ENCODE measurements at regions of chr3 and their contacts with region 1.

Region 1: GRCh38 chr3:69161587-69162307 is 39.4 kb upstream of the LMOD3 start:
- DNase-seq: peak; percentile 81
- H3K4me3 Mint-ChIP-seq: no peak overlapping the region
- H3K27ac Mint-ChIP-seq: no peak overlapping the region
- H3K4me1 Mint-ChIP-seq: peaks cover 2% of the 10 kb centered on the region
- H3K27me3 Mint-ChIP-seq: peaks cover 6% of the 10 kb centered on the region

Region 2: GRCh38 chr3:69410250-69410649 is 248.5 kb after region 1 on chr3:
- intact Hi-C with region 1: loop called (anchors 1 kb)
- DNase-seq: peak; percentile 91
- H3K4me3 Mint-ChIP-seq: no peak overlapping the region
- H3K27ac Mint-ChIP-seq: no peak overlapping the region
- H3K4me1 Mint-ChIP-seq: peaks cover 11% of the 10 kb centered on the region
- H3K27me3 Mint-ChIP-seq: peaks cover 7% of the 10 kb centered on the region

Region 3: DNA sequence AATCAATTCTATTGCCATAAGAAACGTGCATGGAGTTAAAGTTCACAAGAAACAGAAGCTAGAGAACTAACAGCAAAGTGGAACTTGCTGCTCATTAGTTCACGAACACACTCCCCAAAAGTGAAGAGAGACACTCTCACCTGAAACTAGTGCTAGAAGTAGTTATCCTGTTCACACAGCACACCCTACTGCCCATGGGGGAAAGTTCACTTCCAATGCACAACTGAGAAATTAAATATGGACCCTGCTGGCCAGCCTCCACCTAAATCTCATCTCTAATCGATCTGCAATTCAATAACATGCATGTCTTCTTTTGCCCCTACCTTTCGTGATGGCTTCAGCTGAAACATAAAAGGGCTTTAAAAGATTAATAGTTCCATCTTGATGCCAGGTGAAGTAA is 263.5 kb after region 1 on chr3:
- intact Hi-C with region 1: loop called (anchors 1 kb)
- DNase-seq: peak; percentile 79
- H3K4me3 Mint-ChIP-seq: no peak overlapping the region
- H3K27ac Mint-ChIP-seq: no peak overlapping the region
- H3K4me1 Mint-ChIP-seq: peaks cover 5% of the 10 kb centered on the region
- H3K27me3 Mint-ChIP-seq: peaks cover 3% of the 10 kb centered on the region

Region 4: DNA sequence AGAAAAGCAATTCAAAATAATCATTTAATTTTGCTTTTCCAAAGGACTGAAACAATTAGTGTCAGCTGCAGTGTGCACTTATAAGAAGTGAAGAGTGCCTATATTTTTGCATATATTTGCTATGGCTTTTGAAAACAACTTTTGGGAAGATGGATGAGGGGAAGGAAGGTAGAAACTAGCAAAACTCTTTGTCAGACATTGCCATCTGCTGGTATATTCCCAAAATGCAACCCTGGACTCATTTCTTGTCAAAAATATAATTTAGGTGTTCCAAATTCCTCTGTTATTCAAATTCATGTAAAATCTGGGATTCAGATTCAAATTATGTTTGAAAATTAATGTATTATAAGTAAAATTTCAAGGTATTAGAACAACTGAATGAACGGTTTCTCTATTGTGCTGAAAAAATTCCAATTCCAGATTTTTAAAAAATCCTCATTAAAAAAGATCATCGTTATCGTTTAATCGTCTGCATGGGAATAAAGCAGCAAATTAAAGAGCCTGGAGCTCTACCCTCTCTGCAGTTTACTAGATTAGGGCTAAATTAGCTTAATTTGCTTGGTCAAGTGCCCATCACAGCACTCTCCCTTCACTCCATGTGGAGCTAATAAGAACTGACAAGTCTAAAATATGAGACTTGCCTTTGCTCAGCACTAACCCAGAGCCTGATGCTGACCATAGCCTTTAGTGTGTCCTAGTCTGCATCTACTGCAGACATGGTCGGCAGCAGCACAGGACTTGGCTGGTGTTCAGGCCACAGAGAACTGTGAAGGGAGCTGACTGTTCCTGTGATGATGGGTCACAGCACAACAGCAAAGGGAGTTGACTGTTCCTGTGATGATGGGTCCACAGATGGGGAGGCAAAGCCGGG is 509.6 kb after region 1 on chr3:
- intact Hi-C with region 1: loop called (anchors 2 kb)
- DNase-seq: peak; percentile 65
- H3K4me3 Mint-ChIP-seq: no peak overlapping the region
- H3K27ac Mint-ChIP-seq: no peak overlapping the region
- H3K4me1 Mint-ChIP-seq: no peaks in the 10 kb centered on the region
- H3K27me3 Mint-ChIP-seq: no peaks in the 10 kb centered on the region